MCF 10A (cell line): ENCODE measurements at regions of chr11 and their contacts with region 1.

Region 1: GRCh38 chr11:35144136-35144741 is 5.3 kb downstream of the CD44 start:
- DNase-seq: peak; percentile 90
- H3K4me3 Mint-ChIP-seq: peak overlapping the region; percentile 64
- H3K27ac Mint-ChIP-seq: peak overlapping the region; percentile 73
- H3K4me1 Mint-ChIP-seq: peaks cover 57% of the 10 kb centered on the region
- H3K27me3 Mint-ChIP-seq: no peaks in the 10 kb centered on the region
- CTCF ChIP-seq: no peak

Region 2: DNA sequence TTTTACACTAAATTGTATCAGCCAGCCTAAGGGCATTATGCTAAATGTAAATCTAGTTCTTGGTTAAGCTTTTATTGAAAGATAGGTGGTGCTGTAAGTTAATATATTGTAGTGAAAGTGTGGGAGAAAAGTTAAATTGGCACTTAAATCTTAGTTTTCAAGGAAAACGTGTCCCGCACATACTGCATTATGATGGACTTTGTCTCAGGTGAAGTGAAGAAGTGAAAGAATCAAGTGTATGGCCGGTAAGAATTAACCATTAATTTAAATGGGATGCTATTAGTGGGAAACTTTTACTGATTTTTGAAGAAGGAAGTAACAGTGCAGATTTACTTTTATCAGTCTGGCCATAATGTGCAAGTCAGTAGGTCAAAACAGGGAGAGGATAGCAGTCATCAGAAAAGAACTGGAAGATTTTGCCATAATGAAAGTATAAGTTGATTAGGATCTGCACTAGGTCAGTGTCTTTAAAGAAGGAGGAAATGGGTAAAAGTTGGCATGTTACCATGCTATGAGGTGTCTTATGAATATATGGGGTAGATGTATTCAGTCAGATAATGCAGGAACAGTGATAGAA is 146.2 kb before region 1 on chr11:
- CTCF ChIA-PET with region 1: interaction called, 6 read pairs
- POLR2A ChIA-PET with region 1: interaction called, 6 read pairs
- intact Hi-C with region 1: loop called (anchors 1 kb)
- DNase-seq: peak; percentile 21
- H3K4me3 Mint-ChIP-seq: no peak overlapping the region
- H3K27ac Mint-ChIP-seq: peak overlapping the region; percentile 6
- H3K4me1 Mint-ChIP-seq: peaks cover 6% of the 10 kb centered on the region
- H3K27me3 Mint-ChIP-seq: no peaks in the 10 kb centered on the region
- CTCF ChIP-seq: peak; percentile 44

Region 3: GRCh38 chr11:35040221-35040942 is 103.9 kb before region 1 on chr11:
- CTCF ChIA-PET with region 1: no interaction called
- POLR2A ChIA-PET with region 1: interaction called, 10 read pairs
- intact Hi-C with region 1: loop called (anchors 2 kb)
- DNase-seq: peak; percentile 92
- H3K4me3 Mint-ChIP-seq: peak overlapping the region; percentile 69
- H3K27ac Mint-ChIP-seq: peak overlapping the region; percentile 86
- H3K4me1 Mint-ChIP-seq: peaks cover 29% of the 10 kb centered on the region
- H3K27me3 Mint-ChIP-seq: no peaks in the 10 kb centered on the region
- CTCF ChIP-seq: no peak

Region 4: GRCh38 chr11:35116762-35117640 is 27.2 kb before region 1 on chr11:
- CTCF ChIA-PET with region 1: interaction called, 3 read pairs
- POLR2A ChIA-PET with region 1: interaction called, 43 read pairs
- intact Hi-C with region 1: no loop called
- DNase-seq: peak; percentile 9
- H3K4me3 Mint-ChIP-seq: no peak overlapping the region
- H3K27ac Mint-ChIP-seq: peak overlapping the region; percentile 31
- H3K4me1 Mint-ChIP-seq: peaks cover 23% of the 10 kb centered on the region
- H3K27me3 Mint-ChIP-seq: no peaks in the 10 kb centered on the region
- CTCF ChIP-seq: no peak

Region 5: DNA sequence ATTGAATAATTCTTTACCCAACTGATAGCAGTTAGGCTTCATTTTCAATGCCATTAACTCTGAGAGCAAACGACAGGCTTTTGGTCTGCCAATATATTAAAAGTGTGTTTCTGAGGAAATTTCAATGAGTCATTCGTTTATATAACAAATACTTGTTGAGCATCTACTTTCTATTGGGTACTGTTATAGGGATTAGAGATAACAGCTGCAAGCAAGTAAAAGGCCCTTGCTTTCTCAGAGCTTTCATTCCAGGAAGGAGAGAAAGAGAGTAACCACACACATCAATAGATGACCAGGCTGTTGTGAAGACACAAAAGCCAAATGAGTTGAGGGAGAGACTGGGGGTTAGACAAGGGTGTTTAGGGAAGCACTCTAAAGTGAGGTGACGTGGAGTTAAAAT is 30.4 kb after region 1 on chr11:
- CTCF ChIA-PET with region 1: interaction called, 5 read pairs
- POLR2A ChIA-PET with region 1: interaction called, 75 read pairs
- intact Hi-C with region 1: no loop called
- DNase-seq: peak; percentile 30
- H3K4me3 Mint-ChIP-seq: no peak overlapping the region
- H3K27ac Mint-ChIP-seq: peak overlapping the region; percentile 28
- H3K4me1 Mint-ChIP-seq: peaks cover 32% of the 10 kb centered on the region
- H3K27me3 Mint-ChIP-seq: no peaks in the 10 kb centered on the region
- CTCF ChIP-seq: no peak

Region 6: GRCh38 chr11:35305670-35306382 is 161.6 kb after region 1 on chr11:
- CTCF ChIA-PET with region 1: no interaction called
- POLR2A ChIA-PET with region 1: no interaction called
- intact Hi-C with region 1: loop called (anchors 5 kb)
- DNase-seq: peak; percentile 61
- H3K4me3 Mint-ChIP-seq: no peak overlapping the region
- H3K27ac Mint-ChIP-seq: no peak overlapping the region
- H3K4me1 Mint-ChIP-seq: peaks cover 38% of the 10 kb centered on the region
- H3K27me3 Mint-ChIP-seq: no peaks in the 10 kb centered on the region
- CTCF ChIP-seq: peak; percentile 18